Dorsolateral prefrontal cortex (tissue), 120 donors: ENCODE measurements at regions of chr11 and their contacts with region 1.

Region 1: GRCh38 chr11:118699506-118700220 is 20.2 kb upstream of the TREH start:
- DNase-seq: no peak
- H3K4me3 ChIP-seq: no peak overlapping the region
- H3K27ac ChIP-seq: no peak overlapping the region
- H3K27me3 ChIP-seq: no peaks in the 10 kb centered on the region
- CTCF ChIP-seq: no peak

Region 2: GRCh38 chr11:118156531-118157185 is 543.0 kb before region 1 on chr11:
- intact Hi-C with region 1: no loop called
- DNase-seq: peak in 1 of 10 donors; percentile 40
- H3K4me3 ChIP-seq: peak overlapping the region in 1 of 59 donors; percentile 17
- H3K27ac ChIP-seq: no peak overlapping the region
- H3K27me3 ChIP-seq: peaks cover 0 to 12% (median 0%) of the 10 kb centered on the region in 45 donors
- CTCF ChIP-seq: no peak

Region 3: DNA sequence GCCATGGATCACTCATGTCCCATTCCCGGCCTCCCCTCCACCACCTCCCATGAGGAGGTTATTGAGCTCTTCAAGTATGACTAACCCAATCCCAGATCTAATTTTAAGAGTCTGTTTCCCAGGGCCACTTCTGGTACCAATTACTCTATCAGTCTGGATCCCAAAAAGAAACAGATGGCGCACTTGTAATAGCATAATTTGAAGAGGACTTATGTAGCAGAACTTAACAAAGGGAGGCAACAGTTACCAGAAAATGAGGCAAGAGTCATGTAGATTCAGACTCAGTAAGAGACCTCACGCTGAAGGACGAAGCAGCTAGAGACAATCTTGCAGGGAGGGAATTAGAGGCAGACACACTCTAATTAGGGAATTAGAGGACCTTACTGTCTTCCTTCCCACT is 44.4 kb after region 1 on chr11:
- intact Hi-C with region 1: loop called in 1 of 2 experiments (anchors 5 kb)
- DNase-seq: no peak
- H3K4me3 ChIP-seq: no peak overlapping the region
- H3K27ac ChIP-seq: no peak overlapping the region
- H3K27me3 ChIP-seq: no peaks in the 10 kb centered on the region
- CTCF ChIP-seq: no peak